ENCODE measurements at regions of chr5 and their contacts with region 1.

Region 1: DNA sequence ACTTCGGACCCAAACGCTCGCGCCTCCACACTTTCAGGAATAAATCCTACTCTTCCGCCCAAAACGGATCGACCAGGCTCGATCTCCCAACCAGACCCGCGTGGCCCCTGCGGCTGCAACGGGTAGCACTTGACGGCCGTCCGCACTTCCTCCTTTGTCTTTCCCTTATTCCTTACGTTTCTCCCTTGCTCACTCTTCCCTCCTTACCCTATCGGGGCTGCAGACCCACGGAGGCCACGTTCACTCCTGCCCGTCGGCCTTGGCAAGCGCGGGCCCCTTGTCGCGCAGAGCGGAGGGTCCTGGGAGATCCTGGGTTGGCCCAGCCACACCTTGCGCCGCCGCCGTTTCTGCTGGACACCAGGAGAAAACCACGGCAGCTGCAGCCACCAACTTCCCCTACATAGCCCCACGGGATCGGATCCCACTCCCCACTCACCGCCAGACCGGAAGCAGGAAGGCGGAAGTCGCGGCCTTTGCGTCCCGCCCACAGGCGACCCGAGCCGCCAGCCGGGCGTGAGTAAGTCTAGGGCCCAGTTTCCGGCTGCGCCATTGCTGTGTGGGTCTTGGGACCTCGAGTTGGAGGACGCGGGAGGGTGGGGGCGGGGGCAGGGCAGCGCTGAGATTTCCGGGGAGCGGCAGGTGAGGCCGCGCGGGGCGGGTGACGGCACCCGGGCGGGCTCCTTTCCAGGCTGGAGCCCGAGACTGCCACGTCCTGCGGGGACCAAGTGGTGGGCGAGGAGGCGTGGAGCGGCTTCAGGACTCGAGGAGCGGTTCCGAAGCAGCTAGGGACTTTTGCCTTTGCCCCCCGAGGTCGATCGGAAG is at the start of gene SMIM15:
- DNase-seq: peak; percentile 79
- H3K4me3 Mint-ChIP-seq: peak within 1 kb of the TSS; percentile 94
- H3K27ac Mint-ChIP-seq: peak within 1 kb of the TSS; percentile 92
- H3K4me1 Mint-ChIP-seq: peaks cover 38% of the 10 kb centered on the region
- H3K27me3 Mint-ChIP-seq: no peaks in the 10 kb centered on the region
- total RNA-seq, gene SMIM15: 73.2 and 78.3 TPM in 2 replicates

Region 2: DNA sequence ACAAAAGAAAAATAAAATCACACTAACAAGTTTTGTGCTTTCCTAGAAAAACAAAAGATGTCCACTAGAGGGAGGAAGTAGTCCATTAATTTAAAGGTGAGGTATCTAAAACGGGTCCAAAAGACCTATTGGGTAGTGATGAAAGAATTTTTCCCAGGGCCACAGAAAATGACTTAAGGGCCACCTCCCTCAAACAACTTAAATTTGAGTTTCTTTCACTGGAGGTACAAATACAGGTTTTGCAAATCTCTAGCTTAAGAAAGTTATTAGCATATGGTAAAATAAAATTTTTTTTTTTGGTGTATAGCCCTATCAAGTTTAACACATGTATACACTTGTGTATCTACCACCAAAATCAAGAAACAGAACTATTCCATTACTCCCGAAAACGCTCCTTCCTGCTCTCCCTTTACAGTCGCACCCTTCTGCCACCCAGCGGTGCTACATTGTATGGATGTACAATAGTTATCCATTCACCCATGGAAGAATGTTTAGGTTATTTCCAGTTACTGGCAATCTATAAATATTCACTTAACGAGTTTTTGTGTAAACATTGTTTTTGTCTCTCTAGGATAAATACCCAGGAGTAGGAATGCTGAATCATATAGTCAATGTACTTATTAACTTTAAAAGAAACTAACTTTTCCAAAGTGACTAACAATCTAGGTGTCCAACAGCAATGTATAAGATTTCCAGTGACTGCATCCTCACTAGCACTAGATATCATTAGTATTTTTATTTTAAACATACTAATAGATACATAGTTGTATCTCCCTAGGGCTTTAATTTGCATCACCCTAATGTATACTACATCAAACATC is 484.2 kb before region 1 on chr5:
- intact Hi-C with region 1: loop called (anchors 10 kb)
- DNase-seq: no peak
- H3K4me3 Mint-ChIP-seq: no peak overlapping the region
- H3K27ac Mint-ChIP-seq: no peak overlapping the region
- H3K4me1 Mint-ChIP-seq: peaks cover 12% of the 10 kb centered on the region
- H3K27me3 Mint-ChIP-seq: no peaks in the 10 kb centered on the region

Region 3: GRCh38 chr5:61055434-61056006 is 106.7 kb before region 1 on chr5:
- intact Hi-C with region 1: loop called (anchors 10 kb)
- DNase-seq: no peak
- H3K4me3 Mint-ChIP-seq: no peak overlapping the region
- H3K27ac Mint-ChIP-seq: no peak overlapping the region
- H3K4me1 Mint-ChIP-seq: peaks cover 4% of the 10 kb centered on the region
- H3K27me3 Mint-ChIP-seq: no peaks in the 10 kb centered on the region

Region 4: DNA sequence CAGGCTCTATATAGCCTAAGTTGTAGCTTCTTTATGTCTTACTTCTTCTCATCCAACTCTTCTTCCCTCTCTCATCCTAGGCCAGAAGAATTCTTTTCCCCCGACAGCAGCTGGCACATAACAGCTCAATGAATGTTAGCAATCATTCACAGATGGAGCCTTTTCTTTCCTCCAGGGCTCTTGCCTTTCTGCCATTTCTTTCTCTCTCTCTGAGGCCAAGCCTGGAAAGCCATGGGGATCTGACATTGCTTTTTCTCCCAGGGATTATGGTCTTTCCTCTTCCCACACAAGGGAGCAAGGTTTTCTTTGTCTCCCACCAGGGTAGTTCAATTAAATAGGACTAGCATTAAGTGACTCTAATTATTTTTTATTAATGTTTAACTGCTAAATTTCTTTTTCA is 20.4 kb before region 1 on chr5:
- intact Hi-C with region 1: no loop called
- DNase-seq: no peak
- H3K4me3 Mint-ChIP-seq: no peak overlapping the region
- H3K27ac Mint-ChIP-seq: no peak overlapping the region
- H3K4me1 Mint-ChIP-seq: no peaks in the 10 kb centered on the region
- H3K27me3 Mint-ChIP-seq: no peaks in the 10 kb centered on the region

Region 5: DNA sequence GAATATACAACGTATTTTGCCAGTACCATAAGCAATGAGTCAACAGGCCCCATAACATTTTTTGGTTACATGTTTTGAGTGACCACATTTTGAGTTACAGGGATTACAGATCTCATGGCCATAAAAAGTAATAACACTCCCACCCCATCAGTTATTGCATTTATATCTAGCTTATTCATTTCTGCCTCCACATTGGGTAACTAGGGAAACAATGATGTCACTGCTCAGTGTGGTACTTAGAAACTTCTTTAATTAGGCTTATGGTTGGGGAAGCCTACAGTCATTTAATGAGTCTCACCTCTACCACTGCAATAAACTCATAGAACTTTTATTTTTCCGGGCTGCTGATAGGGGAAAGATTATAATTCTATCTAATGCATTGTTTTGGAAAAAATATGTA is 40.0 kb after region 1 on chr5:
- intact Hi-C with region 1: loop called (anchors 1 kb)
- DNase-seq: no peak
- H3K4me3 Mint-ChIP-seq: no peak overlapping the region
- H3K27ac Mint-ChIP-seq: peak overlapping the region; percentile 12
- H3K4me1 Mint-ChIP-seq: peaks cover 9% of the 10 kb centered on the region
- H3K27me3 Mint-ChIP-seq: peaks cover 4% of the 10 kb centered on the region

Region 6: GRCh38 chr5:61215996-61216395 is 53.8 kb after region 1 on chr5:
- intact Hi-C with region 1: no loop called
- DNase-seq: no peak
- H3K4me3 Mint-ChIP-seq: no peak overlapping the region
- H3K27ac Mint-ChIP-seq: no peak overlapping the region
- H3K4me1 Mint-ChIP-seq: no peaks in the 10 kb centered on the region
- H3K27me3 Mint-ChIP-seq: peaks cover 19% of the 10 kb centered on the region

Region 7: DNA sequence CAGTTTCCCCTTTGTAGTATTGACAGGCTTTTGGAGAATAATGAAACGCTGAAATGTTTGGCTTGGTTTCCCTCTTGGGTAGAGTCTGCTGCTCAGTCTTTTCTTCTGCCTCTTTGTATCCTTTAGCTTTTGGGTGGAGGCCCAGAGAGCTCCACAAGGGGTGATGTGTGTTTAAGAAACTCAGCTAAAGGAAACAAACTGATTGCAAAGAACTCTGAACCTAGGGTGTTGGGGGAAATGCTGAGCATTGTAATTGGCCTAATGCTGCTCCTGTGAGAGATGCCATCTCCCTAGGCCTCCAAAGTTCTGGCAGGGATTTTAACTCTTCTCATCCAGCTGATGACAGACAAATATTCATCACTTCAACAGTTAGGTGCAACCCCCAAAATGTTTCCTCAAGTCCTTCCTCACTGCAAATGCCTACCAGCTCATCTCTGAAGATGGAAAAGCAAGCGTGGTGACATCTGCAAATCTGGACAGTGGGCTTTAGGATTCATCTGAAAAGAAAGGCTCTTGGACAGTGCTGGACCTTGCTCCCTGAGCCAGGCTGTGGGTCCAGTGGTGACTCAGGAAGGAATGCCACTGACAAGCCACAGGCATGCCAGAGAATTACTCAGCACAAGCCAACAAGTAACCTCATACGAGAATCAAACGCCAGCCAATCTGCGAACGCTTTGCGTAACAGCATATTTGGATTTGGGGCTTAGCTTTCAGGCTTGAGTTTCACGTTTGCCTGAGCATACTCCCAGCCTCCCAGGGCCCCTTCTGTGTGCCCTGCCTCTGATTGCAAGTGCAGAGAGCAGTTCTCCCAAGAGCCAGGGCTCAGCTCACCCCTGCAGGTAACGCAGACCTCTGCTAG is 139.3 kb after region 1 on chr5:
- intact Hi-C with region 1: loop called (anchors 10 kb)
- DNase-seq: no peak
- H3K4me3 Mint-ChIP-seq: no peak overlapping the region
- H3K27ac Mint-ChIP-seq: no peak overlapping the region
- H3K4me1 Mint-ChIP-seq: peaks cover 30% of the 10 kb centered on the region
- H3K27me3 Mint-ChIP-seq: no peaks in the 10 kb centered on the region

Region 8: GRCh38 chr5:61408476-61409168 is 246.4 kb after region 1 on chr5:
- intact Hi-C with region 1: loop called (anchors 1 kb)
- DNase-seq: peak; percentile 89
- H3K4me3 Mint-ChIP-seq: peak overlapping the region; percentile 54
- H3K27ac Mint-ChIP-seq: no peak overlapping the region
- H3K4me1 Mint-ChIP-seq: peaks cover 20% of the 10 kb centered on the region
- H3K27me3 Mint-ChIP-seq: peaks cover 5% of the 10 kb centered on the region

Region 9: DNA sequence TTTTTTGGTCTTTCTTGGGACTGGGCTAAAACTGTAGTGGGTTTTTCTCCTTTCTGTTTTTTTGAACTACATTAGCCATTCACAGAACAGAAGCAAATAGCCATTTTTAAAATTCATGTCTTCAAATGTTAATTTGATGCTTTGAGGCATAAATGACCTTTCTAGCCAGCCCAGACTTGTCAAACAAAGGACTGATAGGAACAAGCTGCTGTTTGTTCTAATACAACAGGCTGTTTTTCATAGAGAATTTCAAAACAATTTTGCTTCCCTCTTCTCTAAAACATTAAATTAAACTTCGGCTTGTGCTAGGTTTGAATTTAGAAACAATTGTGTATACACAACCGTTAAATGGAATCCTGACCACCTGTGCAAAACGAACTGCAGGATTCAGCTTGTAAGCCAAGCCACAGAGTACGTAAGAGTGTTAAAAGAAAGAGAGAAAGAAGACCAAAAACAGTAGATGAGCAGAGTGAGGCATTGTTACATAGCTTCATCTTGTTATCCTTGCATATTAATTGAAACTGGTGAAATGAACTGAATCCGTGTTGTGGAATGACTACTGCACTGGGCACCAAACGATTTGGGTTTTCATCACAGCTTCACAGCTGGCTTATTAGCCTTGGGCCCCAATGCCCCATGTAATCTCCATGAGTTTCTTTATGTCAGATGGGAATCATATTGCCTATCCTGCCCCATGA is 269.9 kb after region 1 on chr5:
- intact Hi-C with region 1: no loop called
- DNase-seq: no peak
- H3K4me3 Mint-ChIP-seq: no peak overlapping the region
- H3K27ac Mint-ChIP-seq: no peak overlapping the region
- H3K4me1 Mint-ChIP-seq: peaks cover 6% of the 10 kb centered on the region
- H3K27me3 Mint-ChIP-seq: no peaks in the 10 kb centered on the region

Region 10: GRCh38 chr5:61658592-61659008 is 496.4 kb after region 1 on chr5:
- intact Hi-C with region 1: loop called (anchors 10 kb)
- DNase-seq: peak; percentile 56
- H3K4me3 Mint-ChIP-seq: no peak overlapping the region
- H3K27ac Mint-ChIP-seq: no peak overlapping the region
- H3K4me1 Mint-ChIP-seq: peaks cover 2% of the 10 kb centered on the region
- H3K27me3 Mint-ChIP-seq: peaks cover 14% of the 10 kb centered on the region

Measured in activated T-helper 2 cell treated with anti-CD3 and anti-CD28 coated beads, Interferon-gamma antibody, Interleukin-2, Interleukin-4, amounts not matched to agents 10 μg/mL and 5 μg/mL and 100 μg/mL, durations not matched to agents 14 hours and 24 hours and 36 hours (primary cell).